ENCODE measurements at regions of chr2 and their contacts with region 1.

Region 1: DNA sequence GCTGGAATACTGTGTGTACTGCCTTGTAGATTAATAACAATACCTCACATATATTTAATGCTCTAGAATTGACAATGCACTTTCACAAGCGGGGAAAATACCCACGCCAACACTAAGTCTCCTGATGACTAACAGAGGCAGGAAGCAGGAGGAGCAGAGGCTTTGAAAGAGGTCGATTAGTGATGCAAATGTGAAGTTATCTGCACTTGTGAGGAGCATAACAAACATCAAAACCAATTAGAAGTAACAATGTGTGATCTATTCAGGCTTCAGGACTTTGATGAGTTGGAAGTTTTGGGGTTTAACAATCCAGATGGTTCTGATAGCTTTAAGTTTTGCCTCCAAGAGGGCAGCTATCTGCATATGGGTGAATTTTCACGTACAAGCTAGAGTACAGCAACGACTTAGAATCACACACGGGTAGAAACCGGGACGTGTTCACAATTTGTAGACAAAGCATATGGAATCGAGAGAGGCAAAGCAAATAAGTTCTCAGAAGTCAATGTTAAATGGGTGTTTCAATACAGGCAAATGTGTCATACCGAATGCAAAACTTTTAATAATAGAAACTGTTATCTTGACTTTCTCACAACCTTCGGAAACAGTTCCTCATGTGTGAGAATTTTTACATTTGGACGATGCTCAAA is 114.5 kb downstream of the METTL8 start:
- DNase-seq: peak; percentile 53
- H3K4me3 Mint-ChIP-seq: peak overlapping the region; percentile 75
- H3K27ac Mint-ChIP-seq: peak overlapping the region; percentile 95
- H3K4me1 Mint-ChIP-seq: peaks cover 64% of the 10 kb centered on the region
- H3K27me3 Mint-ChIP-seq: no peaks in the 10 kb centered on the region

Region 2: DNA sequence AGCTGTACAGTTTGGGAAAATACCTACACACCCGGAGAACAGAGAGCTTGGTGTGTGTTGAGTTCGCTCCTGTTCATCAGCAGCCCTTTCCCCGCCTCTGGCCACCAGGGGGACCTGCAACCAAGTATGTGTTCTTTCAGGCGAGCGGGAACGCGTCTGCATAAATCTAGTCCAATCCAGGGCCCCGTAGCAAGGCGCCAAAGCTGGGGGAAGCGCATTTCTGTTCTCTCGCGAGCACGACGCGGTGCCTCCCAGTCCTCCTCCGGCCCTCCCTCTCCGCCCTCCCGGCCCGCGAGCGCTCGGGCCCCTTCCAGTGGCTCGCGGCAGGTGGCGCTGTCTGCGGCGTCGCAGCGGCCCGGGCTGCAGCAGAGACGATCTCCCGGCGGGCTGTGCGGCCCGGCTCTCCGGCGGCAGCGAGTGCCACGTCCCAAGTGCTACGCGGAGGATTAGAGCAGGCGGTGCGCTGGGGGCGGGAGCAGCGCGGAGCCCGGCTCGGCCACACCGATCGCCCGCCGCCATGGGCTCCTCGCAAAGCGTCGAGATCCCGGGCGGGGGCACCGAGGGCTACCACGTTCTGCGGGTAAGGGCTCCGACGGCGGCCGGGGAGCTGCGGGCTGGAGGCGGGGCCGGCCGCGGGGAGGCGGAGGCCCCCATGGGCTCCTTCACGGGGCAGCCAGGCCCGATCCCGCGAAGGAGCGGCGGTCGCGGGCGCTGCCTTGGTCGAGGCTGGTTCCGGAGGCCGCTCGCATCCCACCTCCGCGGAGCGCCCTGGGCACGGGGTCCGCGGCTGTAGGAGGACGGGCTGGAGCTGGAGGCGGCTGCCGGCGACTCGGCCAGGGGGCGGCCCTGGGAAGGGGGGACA is 390.2 kb before region 1 on chr2 and contains the start of gene GORASP2:
- intact Hi-C with region 1: loop called (anchors 2 kb)
- DNase-seq: peak; percentile 97
- H3K4me3 Mint-ChIP-seq: peak within 1 kb of the TSS; percentile 92
- H3K27ac Mint-ChIP-seq: peak within 1 kb of the TSS; percentile 92
- H3K4me1 Mint-ChIP-seq: peaks cover 45% of the 10 kb centered on the region
- H3K27me3 Mint-ChIP-seq: peaks cover 2% of the 10 kb centered on the region
- total RNA-seq, gene GORASP2: 99.5 and 104 TPM in 2 replicates

Region 3: GRCh38 chr2:171086352-171087290 is 232.7 kb before region 1 on chr2:
- intact Hi-C with region 1: loop called (anchors 2 kb)
- DNase-seq: peak; percentile 23
- H3K4me3 Mint-ChIP-seq: peak overlapping the region; percentile 77
- H3K27ac Mint-ChIP-seq: peak overlapping the region; percentile 82
- H3K4me1 Mint-ChIP-seq: peaks cover 52% of the 10 kb centered on the region
- H3K27me3 Mint-ChIP-seq: no peaks in the 10 kb centered on the region

Region 4: DNA sequence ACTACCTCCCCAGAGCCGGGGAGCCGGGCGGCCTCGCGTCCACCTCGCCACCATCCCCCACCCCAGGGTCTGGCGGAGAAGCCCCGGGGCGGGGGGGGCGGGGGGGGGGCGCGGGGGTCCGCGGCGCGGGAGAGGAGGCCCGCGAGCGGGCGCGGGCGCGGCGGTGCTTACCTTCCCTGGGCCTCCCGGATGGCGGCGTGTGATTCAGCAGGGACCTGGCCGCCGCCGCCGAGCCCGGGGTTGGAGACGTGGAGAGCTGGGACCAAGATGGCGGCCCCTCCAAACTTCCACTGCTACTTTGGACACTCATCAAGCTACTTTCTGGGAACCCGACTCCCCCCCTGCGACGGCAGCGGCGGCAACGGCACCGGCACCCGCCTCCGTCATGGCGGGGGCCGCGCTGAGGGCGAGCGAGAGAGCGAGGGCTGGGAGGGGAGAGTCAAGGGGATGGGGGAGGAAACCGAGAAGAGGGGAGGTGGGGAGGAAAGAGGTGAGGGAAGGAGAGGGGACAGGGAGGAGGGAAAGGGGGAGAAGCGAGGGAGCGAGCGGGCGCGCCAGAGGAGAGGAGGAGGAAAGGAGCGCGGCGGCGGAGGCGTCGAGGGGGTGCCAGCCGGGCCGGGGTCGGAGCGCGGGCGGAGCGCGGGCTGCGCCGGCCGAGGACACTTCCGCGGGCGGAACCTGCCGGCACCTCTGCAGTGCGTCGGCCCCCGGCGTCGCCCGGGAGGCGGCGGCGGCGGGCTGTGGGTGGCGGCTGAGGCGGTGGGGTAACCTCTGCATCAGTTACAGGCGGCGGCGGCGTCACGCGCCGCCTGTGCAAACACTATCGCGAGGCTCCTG is 158.9 kb before region 1 on chr2 and contains the start of gene TLK1:
- intact Hi-C with region 1: loop called (anchors 1 kb)
- DNase-seq: peak; percentile 64
- H3K4me3 Mint-ChIP-seq: peak within 1 kb of the TSS; percentile 96
- H3K27ac Mint-ChIP-seq: peak within 1 kb of the TSS; percentile 98
- H3K4me1 Mint-ChIP-seq: peaks cover 71% of the 10 kb centered on the region
- H3K27me3 Mint-ChIP-seq: peaks cover 2% of the 10 kb centered on the region
- total RNA-seq, gene TLK1: 106 and 112 TPM in 2 replicates

Region 5: GRCh38 chr2:171260471-171261424 is 58.5 kb before region 1 on chr2:
- intact Hi-C with region 1: loop called (anchors 1 kb)
- DNase-seq: no peak
- H3K4me3 Mint-ChIP-seq: no peak overlapping the region
- H3K27ac Mint-ChIP-seq: peak overlapping the region; percentile 83
- H3K4me1 Mint-ChIP-seq: peaks cover 31% of the 10 kb centered on the region
- H3K27me3 Mint-ChIP-seq: no peaks in the 10 kb centered on the region

Region 6: DNA sequence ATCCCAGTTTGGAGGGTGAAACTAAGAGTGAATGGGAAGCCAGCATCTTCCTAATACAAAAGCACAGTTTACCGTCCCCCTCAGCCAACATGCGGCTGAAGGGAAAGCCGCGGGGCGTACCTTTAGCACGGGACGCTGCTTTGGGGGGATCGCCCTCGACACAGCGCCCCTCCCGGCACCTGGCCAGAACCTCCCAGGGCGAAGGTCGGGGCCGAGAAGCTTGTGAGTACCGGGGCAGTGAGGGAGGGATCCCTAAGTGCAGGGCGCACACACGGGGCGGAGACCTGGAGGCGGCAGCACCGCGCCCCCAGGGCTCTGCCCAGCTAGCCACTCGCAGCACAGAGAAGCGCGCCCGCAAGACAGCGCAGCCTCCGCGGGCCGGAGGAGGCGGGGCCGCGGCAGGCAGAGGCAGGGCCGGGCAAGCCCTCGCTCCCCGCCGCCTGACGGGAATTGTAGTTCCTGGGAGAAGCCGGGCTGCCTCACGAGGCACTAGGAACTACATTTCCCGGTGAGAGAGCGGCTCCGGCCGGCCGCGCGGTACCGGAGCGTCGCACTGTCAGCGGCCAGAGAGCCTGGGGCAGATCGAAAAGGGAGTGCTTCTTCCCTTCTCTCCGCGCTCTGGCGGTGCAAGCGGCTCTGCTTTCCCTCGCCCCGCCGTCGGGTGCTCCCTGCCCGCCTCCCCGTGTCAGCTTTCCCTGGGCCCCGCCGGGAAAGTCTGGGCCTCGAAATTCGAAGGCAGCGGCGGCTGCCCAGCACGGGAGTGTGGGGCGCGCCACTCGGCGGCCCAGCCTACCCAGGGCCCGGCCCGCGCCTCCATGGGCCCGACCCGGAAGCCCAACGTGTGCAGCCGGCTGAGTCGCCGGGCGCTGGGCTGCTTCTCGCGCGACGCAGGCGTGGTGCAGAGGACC is 114.7 kb after region 1 on chr2 and contains the starts of genes DCAF17 and METTL8:
- intact Hi-C with region 1: loop called (anchors 1 kb)
- DNase-seq: peak; percentile 93
- H3K4me3 Mint-ChIP-seq: peak within 1 kb of the TSS; percentile 95
- H3K27ac Mint-ChIP-seq: peak within 1 kb of the TSS; percentile 98
- H3K4me1 Mint-ChIP-seq: peaks cover 28% of the 10 kb centered on the region
- H3K27me3 Mint-ChIP-seq: no peaks in the 10 kb centered on the region
- total RNA-seq, gene DCAF17: 23.9 and 24.9 TPM in 2 replicates
- total RNA-seq, gene METTL8: 31.8 and 36.4 TPM in 2 replicates

Measured in activated T-helper 1 cell treated with anti-CD3 and anti-CD28 coated beads, Interleukin-12 subunit alpha, Interleukin-12 subunit beta, Interleukin-2, Interleukin-4 antibody, amounts not matched to agents 30 ng/mL and 10 ng/mL and 1 ng/mL, durations not matched to agents 14 hours and 24 hours and 36 hours (primary cell).